Activated CD8-positive, alpha-beta T cell treated with anti-CD3 and anti-CD28 coated beads for 36 hours (primary cell): ENCODE measurements at regions of chr2 and their contacts with region 1.

Region 1: GRCh38 chr2:28452534-28453081 is 43.3 kb upstream of the PLB1 start:
- DNase-seq: peak; percentile 91
- ATAC-seq: peak; percentile 72
- H3K4me3 Mint-ChIP-seq: no peak overlapping the region
- H3K27ac Mint-ChIP-seq: no peak overlapping the region
- H3K4me1 Mint-ChIP-seq: peaks cover 41% of the 10 kb centered on the region
- H3K27me3 Mint-ChIP-seq: no peaks in the 10 kb centered on the region
- CTCF ChIP-seq: peak; percentile 96

Region 2: DNA sequence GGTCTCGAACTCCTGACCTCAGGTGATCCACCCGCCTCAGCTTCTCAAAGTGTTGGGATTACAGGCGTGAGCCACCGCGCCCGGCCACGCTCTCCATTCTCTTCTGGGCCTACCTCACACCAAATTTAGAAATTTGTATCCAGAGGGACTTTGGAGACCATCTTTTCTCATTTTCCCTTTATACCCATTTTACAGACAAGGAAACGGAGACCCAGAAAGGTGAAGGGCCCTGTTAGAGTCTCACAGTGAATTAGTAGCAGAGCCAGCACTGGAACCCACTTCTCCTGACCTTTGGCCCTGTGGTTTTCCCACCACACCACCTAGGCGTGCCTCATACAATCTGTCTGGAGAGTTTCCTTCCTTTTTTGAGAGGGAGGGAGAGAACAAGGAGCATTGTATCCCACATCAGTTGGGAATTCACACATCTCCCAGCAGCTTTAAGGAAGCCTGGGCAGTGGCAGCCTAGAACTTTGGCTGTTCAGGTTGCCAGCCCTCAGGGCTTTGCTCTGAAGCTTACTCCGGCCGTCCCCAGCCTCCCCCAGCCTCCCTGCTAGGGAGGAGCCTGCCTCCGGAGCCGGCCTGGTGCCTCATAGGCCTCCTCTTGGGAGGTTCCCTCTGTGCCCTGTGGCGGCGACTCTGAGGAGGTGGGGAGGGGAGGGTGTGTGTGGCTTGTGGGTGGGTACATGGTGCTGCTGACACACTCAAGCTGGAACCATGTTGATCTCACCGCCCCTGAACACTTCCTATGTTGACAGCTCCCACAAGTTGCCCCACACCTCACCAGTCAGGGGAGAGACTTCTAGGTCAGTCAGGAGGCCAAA is 46.1 kb before region 1 on chr2:
- CTCF ChIA-PET with region 1: interaction called, 6 read pairs
- POLR2A ChIA-PET with region 1: interaction called, 10 read pairs
- intact Hi-C with region 1: loop called (anchors 5 kb)
- DNase-seq: peak; percentile 89
- ATAC-seq: peak; percentile 61
- H3K4me3 Mint-ChIP-seq: no peak overlapping the region
- H3K27ac Mint-ChIP-seq: peak overlapping the region; percentile 97
- H3K4me1 Mint-ChIP-seq: peaks cover 96% of the 10 kb centered on the region
- H3K27me3 Mint-ChIP-seq: no peaks in the 10 kb centered on the region
- CTCF ChIP-seq: no peak

Region 3: DNA sequence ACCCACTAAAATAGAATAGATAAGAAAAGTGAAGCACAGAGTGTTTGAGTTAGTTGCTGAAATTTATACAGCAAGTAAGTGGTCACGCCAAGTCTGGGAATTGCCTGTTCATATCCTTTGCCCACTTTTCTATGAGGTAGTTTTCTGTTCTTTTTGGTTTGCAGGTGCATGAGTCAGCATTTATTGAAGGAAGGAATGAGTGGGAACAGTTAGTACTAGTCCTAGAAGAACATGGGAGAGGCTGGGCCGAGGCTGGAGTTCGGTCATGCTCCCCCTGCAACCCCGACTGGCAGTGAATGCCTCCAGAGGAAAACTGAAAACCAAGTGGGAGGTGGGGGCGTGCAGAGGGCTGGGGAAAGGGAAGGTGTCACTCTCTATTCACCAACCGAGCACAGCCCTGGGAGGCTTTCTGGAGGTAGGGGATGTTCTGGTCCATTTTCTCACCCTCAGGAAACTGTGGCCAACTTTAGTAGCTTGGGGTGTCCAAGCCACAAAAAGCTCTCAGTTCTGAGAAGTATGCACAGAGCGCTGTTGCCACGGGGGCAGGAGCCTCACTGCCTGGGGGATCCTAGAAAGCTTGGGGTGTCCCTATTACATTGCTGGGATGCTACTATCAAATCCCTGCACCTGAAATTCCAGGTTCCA is 18.5 kb before region 1 on chr2:
- CTCF ChIA-PET with region 1: no interaction called
- POLR2A ChIA-PET with region 1: no interaction called
- intact Hi-C with region 1: no loop called
- DNase-seq: no peak
- ATAC-seq: peak; percentile 44
- H3K4me3 Mint-ChIP-seq: no peak overlapping the region
- H3K27ac Mint-ChIP-seq: no peak overlapping the region
- H3K4me1 Mint-ChIP-seq: peaks cover 42% of the 10 kb centered on the region
- H3K27me3 Mint-ChIP-seq: no peaks in the 10 kb centered on the region
- CTCF ChIP-seq: no peak

Region 4: GRCh38 chr2:28463893-28464292 is 11.3 kb after region 1 on chr2:
- CTCF ChIA-PET with region 1: interaction called, 14 read pairs
- POLR2A ChIA-PET with region 1: interaction called, 3 read pairs
- intact Hi-C with region 1: no loop called
- DNase-seq: no peak
- ATAC-seq: no peak
- H3K4me3 Mint-ChIP-seq: no peak overlapping the region
- H3K27ac Mint-ChIP-seq: no peak overlapping the region
- H3K4me1 Mint-ChIP-seq: peaks cover 24% of the 10 kb centered on the region
- H3K27me3 Mint-ChIP-seq: peaks cover 14% of the 10 kb centered on the region
- CTCF ChIP-seq: no peak